Calu3 (cell line): ENCODE measurements at regions of chr9 and their contacts with region 1.

Region 1: DNA sequence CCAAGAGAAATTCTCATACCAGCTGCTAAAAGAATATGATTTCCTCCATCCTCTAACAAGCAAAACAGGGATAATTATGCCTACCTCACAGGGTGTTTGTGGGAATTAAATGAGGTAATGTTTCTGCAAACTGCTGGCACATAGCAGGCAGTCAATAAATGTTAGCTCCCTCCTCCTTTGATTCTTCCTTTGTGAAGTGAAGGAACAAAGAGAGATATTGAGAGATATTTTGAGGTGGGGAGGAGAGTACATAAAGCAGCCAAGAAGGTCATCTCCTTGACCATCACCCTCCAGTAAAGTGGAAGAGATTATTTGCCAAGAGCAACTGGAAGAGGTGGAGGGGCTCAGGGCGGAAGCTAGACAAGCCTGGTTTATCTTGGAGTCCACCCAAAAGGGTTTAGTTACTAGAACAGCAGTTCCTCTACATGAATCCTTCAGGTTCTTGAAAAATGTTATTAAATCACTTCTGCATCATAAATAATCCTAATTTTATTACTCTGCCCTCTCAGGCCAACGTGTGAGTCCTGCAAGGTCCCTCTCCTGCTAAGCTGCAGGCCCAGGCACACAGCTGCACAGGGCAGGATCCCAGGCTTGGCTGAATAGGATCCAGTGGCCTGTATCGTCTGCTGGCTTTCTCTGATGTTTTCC is 35.0 kb upstream of the TLE1 start:
- DNase-seq: no peak
- H3K4me3 Mint-ChIP-seq: no peak overlapping the region
- H3K27ac Mint-ChIP-seq: no peak overlapping the region
- H3K4me1 Mint-ChIP-seq: peaks cover 18% of the 10 kb centered on the region
- H3K27me3 Mint-ChIP-seq: no peaks in the 10 kb centered on the region
- CTCF ChIP-seq: no peak

Region 2: DNA sequence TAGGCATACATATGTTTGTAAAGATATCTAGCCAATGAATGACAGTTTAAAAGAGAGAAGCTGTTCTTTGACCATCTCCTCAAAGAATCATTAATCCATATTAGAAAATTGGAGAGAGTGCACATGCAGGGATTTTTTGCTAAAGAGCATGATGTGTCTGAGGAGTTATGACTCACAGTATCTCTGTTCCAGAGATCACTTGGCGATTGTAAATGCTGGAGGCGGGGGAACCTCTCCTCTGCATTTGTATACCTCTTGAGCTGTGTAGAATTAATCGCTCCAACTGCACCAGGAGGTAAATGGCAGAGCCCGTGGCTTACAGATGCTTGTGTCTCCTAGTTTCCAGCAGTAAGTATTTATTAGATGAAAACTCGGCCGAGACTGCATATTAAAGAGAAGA is 260.6 kb after region 1 on chr9:
- CTCF ChIA-PET with region 1: no interaction called
- intact Hi-C with region 1: no loop called
- DNase-seq: no peak
- H3K4me3 Mint-ChIP-seq: no peak overlapping the region
- H3K27ac Mint-ChIP-seq: no peak overlapping the region
- H3K4me1 Mint-ChIP-seq: no peaks in the 10 kb centered on the region
- H3K27me3 Mint-ChIP-seq: no peaks in the 10 kb centered on the region
- CTCF ChIP-seq: no peak

Region 3: DNA sequence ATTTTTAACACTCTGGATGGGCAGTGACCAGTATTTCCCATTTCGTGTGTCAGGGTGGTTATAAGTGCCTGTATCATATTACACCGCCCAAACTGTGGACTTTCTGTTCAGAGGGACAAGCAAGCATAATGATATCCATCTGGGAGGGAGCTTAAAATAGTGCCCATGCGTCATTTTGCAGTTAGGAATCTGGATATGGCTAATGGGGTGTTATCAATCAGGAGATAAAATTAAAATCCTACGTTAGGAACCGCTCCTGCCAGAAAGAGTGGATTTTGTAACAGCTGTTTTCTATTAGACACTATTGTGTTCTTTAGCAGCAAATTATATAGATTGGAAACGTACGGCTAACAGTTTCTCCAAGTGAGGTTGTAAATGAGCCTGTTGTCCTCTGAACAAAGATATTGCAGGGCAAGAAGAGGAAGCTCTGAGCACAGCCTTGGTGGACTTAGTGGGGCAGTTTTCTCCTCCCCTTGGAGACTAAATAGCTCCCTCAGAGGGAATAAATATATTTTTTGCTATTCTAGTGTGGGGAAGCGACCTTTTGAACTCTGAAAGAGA is 424.6 kb after region 1 on chr9:
- CTCF ChIA-PET with region 1: no interaction called
- intact Hi-C with region 1: loop called (anchors 5 kb)
- DNase-seq: no peak
- H3K4me3 Mint-ChIP-seq: no peak overlapping the region
- H3K27ac Mint-ChIP-seq: no peak overlapping the region
- H3K4me1 Mint-ChIP-seq: peaks cover 9% of the 10 kb centered on the region
- H3K27me3 Mint-ChIP-seq: no peaks in the 10 kb centered on the region
- CTCF ChIP-seq: no peak